Posterior cingulate gyrus (tissue), 11 donors: ENCODE measurements at regions of chr11 and their contacts with region 1.

Region 1: GRCh38 chr11:117796872-117797529 is at the start of gene DSCAML1:
- DNase-seq: peak; percentile 64 to 96 (median 76)

Region 2: GRCh38 chr11:117664897-117665296 is 132.1 kb before region 1 on chr11:
- intact Hi-C with region 1: loop called (anchors 5 kb)
- DNase-seq: peak in 2 of 10 donors; percentile 53 to 58

Region 3: DNA sequence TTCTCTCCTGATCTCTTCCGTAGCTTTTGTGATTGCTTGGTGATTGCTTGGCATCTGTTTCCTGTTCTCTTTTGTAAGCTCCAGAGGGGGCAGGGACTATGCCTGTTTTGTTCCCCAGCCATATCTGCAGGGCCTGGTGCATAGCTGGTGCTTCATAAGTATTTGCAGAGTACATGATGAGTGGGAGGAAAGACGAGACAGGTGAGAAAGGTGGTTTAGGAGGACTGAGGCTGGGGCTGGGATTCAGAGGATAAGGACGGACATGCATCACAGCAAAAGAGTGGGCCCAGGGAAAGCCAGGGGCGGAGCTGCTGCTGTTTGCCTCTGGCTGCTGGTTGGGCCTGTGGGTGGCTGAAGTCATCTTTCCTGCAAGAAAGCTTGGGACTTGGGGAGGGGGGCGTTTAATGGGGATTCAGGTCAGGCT is 62.4 kb before region 1 on chr11:
- intact Hi-C with region 1: loop called (anchors 10 kb)
- DNase-seq: peak in 4 of 10 donors; percentile 45 to 91 (median 66)

Region 4: GRCh38 chr11:117851106-117851505 is 54.1 kb after region 1 on chr11:
- intact Hi-C with region 1: no loop called
- DNase-seq: peak in 3 of 10 donors; percentile 9 to 34 (median 16)